ENCODE measurements at regions of chr1 and their contacts with region 1.

Region 1: DNA sequence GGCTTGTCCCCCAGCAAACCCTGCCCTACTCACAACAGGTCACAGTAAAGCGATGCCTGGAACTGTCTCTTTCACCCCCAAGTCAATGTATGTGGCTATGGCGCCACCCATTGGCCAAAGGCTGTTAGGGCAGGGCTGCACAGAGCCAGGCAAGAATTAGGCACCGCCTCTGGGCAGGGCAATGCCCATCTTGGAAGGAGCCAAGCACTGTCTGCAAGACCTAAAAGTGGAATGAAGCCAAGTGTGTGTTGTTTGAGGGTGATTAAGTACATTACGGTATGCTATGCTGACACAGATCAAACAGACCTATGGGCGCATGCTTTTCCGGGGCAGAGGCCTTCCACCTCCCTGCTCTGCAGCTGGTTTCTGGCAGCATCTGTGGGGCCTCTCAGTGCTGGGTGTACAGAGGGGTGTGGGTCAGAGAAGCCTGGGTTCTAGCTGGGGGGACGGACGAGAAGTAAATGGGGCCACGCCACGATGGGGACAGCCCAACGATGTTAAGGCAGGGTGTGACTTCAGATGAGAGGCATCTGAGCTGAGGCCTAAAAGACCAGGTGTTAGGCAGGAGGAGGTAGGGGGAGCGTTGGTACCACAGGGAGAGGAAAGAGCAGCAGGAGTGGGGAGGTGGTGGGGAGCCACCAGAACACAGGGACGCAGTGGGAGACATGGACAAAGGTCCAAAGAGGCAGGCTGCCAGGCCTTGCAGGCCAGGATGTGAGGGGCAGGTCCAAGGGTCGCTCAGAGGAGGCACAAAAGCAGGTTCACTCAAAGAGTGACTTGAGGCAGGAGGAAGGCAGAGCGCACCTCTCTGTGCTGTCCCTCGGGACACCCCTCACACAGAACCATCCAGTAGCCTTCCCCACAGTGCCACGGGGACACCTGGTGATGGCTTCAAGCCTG is 49.8 kb downstream of the ACOT7 start:
- DNase-seq: peak; percentile 69
- ATAC-seq: peak; percentile 85 to 90

Region 2: GRCh38 chr1:5992026-5992813 is 351.5 kb before region 1 on chr1 and contains the start of gene NPHP4:
- intact Hi-C with region 1: no loop called
- DNase-seq: peak; percentile 100
- ATAC-seq: peak; percentile 97
- total RNA-seq, gene NPHP4: 5.1 to 7.3 TPM

Region 3: GRCh38 chr1:6041432-6042062 is 302.2 kb before region 1 on chr1:
- intact Hi-C with region 1: loop called in 1 of 2 experiments (anchors 10 kb)
- DNase-seq: no peak
- ATAC-seq: peak; percentile 41 to 42

Region 4: DNA sequence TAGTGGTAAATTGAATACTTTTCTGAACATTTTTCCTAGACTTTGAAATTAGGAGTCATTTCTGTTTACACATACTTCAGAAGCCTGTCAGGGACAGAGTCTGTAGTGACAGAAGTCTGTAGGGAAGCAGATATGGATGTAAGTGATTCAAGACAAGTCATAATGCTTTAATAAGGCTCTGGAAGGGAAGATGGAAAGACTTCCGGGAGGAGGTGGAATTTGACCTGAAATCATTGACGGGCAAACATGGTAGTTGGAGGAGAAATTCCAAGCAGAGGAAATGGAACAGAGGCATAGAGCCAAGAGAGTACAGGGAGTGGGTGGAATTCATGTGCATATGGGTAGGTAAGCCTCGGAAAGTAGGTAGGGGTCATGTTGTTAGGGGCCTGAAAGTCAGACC is 464.0 kb after region 1 on chr1:
- intact Hi-C with region 1: no loop called
- DNase-seq: no peak
- ATAC-seq: no peak

Measured in left cardiac atrium (tissue), 4 donors.